ENCODE measurements at regions of chr3 and their contacts with region 1.

Region 1: GRCh38 chr3:71854096-71854495 is 69.1 kb upstream of the PROK2 start:
- DNase-seq: no peak
- ATAC-seq: no peak
- H3K4me3 ChIP-seq: no peak overlapping the region
- H3K27ac ChIP-seq: no peak overlapping the region
- H3K4me1 ChIP-seq: no peaks in the 10 kb centered on the region
- H3K27me3 ChIP-seq: peaks cover 10 to 25% of the 10 kb centered on the region in 2 experiments; a peak in 4 of 5 replicates
- CTCF ChIP-seq: no peak
- EP300 ChIP-seq: no peak
- POLR2A ChIP-seq: no peak
- RAD21 ChIP-seq: no peak

Region 2: GRCh38 chr3:71734883-71735282 is 119.2 kb before region 1 on chr3:
- CTCF ChIA-PET with region 1: interaction called, 8 read pairs
- POLR2A ChIA-PET with region 1: no interaction called
- in situ Hi-C with region 1: loop called (anchors 5 kb)
- intact Hi-C with region 1: no loop called
- DNase-seq: no peak
- ATAC-seq: no peak
- H3K4me3 ChIP-seq: no peak overlapping the region
- H3K27ac ChIP-seq: no peak overlapping the region
- H3K4me1 ChIP-seq: no peaks in the 10 kb centered on the region
- H3K27me3 ChIP-seq: no peaks in the 10 kb centered on the region
- CTCF ChIP-seq: no peak
- EP300 ChIP-seq: no peak
- POLR2A ChIP-seq: no peak
- RAD21 ChIP-seq: no peak

Region 3: GRCh38 chr3:71843071-71843470 is 11.0 kb before region 1 on chr3:
- CTCF ChIA-PET with region 1: no interaction called
- POLR2A ChIA-PET with region 1: no interaction called
- in situ Hi-C with region 1: no loop called
- intact Hi-C with region 1: no loop called
- DNase-seq: no peak
- ATAC-seq: no peak
- H3K4me3 ChIP-seq: no peak overlapping the region
- H3K27ac ChIP-seq: no peak overlapping the region
- H3K4me1 ChIP-seq: no peaks in the 10 kb centered on the region
- H3K27me3 ChIP-seq: no peaks in the 10 kb centered on the region
- CTCF ChIP-seq: no peak
- EP300 ChIP-seq: no peak
- POLR2A ChIP-seq: no peak
- RAD21 ChIP-seq: no peak